ENCODE measurements at regions of chr1 and their contacts with region 1.

Region 1: DNA sequence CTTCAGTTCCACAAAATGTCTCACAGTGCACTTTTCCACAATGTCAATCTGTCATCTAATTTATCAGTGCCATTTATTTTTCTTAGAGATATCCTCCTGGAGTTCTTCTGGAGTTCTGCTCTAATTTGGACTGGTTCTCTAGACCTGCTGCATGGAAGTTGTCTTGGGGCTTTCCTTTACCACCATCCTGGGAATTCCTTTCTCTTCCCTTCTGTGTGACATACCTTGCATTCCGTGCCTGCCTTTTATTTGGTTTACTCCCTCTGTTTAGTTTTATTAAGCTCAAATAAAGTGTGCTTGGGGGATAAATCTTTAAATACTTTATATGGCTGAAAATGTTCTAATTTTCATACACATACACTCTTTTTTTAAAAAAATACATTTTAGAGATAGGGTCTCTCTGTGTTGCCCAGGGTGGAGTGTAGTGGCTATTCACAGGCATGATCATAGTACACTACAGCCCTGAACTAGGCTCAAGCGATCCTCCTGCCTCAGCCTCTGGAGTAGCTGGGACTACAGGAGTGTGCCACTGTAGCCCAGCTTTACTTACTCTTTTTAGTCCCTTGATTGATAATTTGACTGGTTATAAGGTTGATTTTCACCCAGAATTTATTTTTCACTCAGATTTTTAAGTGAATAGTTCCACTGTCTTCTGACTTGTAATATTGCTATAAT is 14.4 kb downstream of the MTF2 start:
- DNase-seq: no peak
- ATAC-seq: peak; percentile 58
- H3K4me3 ChIP-seq: no peak overlapping the region
- H3K27ac ChIP-seq: no peak overlapping the region
- H3K4me1 ChIP-seq: no peaks in the 10 kb centered on the region
- H3K27me3 ChIP-seq: no peaks in the 10 kb centered on the region
- CTCF ChIP-seq: no peak

Region 2: GRCh38 chr1:93114391-93114790 is 20.9 kb after region 1 on chr1:
- CTCF ChIA-PET with region 1: interaction called, 3 read pairs
- POLR2A ChIA-PET with region 1: no interaction called
- intact Hi-C with region 1: loop called (anchors 2 kb)
- DNase-seq: peak; percentile 83
- ATAC-seq: peak; percentile 95
- H3K4me3 ChIP-seq: 0 out of 2 replicates have a peak overlapping the region, but pooled peaks have one; percentile 26
- H3K27ac ChIP-seq: peak overlapping the region; percentile 56
- H3K4me1 ChIP-seq: peaks cover 31% of the 10 kb centered on the region
- H3K27me3 ChIP-seq: no peaks in the 10 kb centered on the region
- CTCF ChIP-seq: no peak

Measured in PC-3 (cell line).